ENCODE measurements at regions of chr4 and their contacts with region 1.

Region 1: DNA sequence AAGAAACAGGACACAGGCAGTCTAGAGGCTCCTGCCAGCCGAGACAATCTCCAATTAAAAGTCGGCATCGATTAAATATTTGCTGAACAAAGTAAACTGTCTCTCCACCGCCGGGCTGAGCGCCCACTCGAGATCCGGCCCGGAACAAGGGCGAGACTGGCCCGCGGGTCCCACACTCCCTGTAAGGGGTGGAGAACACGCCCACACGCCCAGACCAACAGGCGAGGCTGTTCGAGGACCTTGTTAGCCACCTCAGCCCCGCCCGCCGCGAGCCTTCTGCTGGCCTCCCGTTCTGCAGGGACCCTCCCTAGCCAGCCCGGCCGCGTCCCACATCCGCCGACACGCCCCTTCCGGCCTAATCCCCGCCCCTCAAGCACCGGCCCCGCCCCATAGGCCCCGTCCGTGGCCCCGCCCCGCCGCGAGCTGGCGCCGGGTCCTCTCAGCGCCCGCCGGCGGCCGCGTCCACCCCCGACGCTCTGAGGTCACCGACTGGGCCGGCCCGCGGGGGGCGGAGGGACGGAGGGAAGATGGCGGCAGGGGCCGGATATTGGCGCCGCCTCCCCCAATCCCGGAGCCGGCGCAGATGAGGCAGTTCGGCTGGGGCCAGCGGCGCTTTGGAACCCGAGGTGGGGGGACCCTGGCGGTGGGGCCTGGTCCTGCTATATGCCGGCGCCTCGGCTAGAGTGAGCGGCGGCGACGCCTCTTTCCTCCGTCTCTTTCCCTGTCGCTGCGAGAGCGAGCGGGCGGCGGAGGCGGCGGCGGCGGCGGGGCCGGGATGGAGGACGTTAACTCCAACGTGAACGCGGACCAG is at the start of gene SLAIN2:
- DNase-seq: peak; percentile 95 to 99 (median 96)
- H3K4me3 ChIP-seq: peak within 1 kb of the TSS; percentile 70 to 99 (median 91)
- H3K27ac ChIP-seq: peak within 1 kb of the TSS; percentile 88 to 99 (median 97)
- H3K27me3 ChIP-seq: no peaks in the 10 kb centered on the region
- CTCF ChIP-seq: peak in 43 of 56 donors; percentile 8 to 53 (median 31)
- total RNA-seq, gene SLAIN2: 34.7 to 126 (median 68.5) TPM

Region 2: GRCh38 chr4:48396043-48396442 is 54.9 kb after region 1 on chr4:
- intact Hi-C with region 1: loop called in 1 of 2 experiments (anchors 10 kb)
- DNase-seq: no peak
- H3K4me3 ChIP-seq: no peak overlapping the region
- H3K27ac ChIP-seq: no peak overlapping the region
- H3K27me3 ChIP-seq: no peaks in the 10 kb centered on the region
- CTCF ChIP-seq: no peak

Region 3: GRCh38 chr4:48830706-48831531 is 489.7 kb after region 1 on chr4 and contains the start of gene OCIAD1:
- intact Hi-C with region 1: no loop called
- DNase-seq: peak; percentile 96 to 99 (median 98)
- H3K4me3 ChIP-seq: peak within 1 kb of the TSS; percentile 63 to 99 (median 88)
- H3K27ac ChIP-seq: peak within 1 kb of the TSS; percentile 76 to 99 (median 94)
- H3K27me3 ChIP-seq: no peaks in the 10 kb centered on the region
- CTCF ChIP-seq: peak in 28 of 56 donors; percentile 6 to 44 (median 24)
- total RNA-seq, gene OCIAD1: 135 to 352 (median 263) TPM

Region 4: DNA sequence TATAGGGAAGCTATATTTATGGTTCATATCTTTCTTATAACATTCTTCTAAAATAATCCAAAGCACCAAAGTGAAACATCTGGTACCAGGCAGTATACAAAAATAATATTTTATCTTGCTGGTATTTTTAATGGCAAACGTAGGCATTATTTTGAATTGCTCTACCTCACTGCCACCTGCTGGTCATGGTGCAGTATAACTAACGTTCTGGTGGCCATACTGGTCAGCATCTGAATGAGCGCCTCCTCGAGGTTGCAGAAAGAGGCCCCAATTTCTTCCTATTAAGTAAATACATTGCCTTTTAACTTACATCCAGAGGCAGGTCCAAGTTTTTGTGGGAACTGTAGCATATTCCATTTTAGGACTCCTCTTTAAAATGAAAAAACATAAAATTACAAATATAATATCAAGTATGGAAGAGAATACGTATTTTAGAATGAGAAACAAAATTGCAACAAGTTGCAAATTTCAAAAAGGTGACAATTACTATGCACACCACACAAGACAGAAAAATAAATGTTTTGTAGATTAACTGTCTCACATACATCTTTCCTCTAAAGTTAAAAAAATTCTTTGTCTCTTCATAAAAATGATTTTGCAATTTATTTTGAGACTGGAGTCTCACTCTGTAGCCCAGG is 622.0 kb after region 1 on chr4:
- intact Hi-C with region 1: loop called in 1 of 2 experiments (anchors 10 kb)
- DNase-seq: peak; percentile 33 to 78 (median 60)
- H3K4me3 ChIP-seq: no peak overlapping the region
- H3K27ac ChIP-seq: no peak overlapping the region
- H3K27me3 ChIP-seq: no peaks in the 10 kb centered on the region
- CTCF ChIP-seq: peak; percentile 82 to 100 (median 98)

Measured in dorsolateral prefrontal cortex (tissue), 120 donors.